CD4-positive, alpha-beta T cell (primary cell): ENCODE measurements at regions of chr17 and their contacts with region 1.

Region 1: GRCh38 chr17:63634163-63634562 is 11.9 kb downstream of the MAP3K3 start:
- DNase-seq: no peak
- ATAC-seq: no peak
- H3K4me3 ChIP-seq: no peak overlapping the region
- H3K4me3 Mint-ChIP-seq: no peak overlapping the region
- H3K27ac ChIP-seq: no peak overlapping the region
- H3K27ac Mint-ChIP-seq: no peak overlapping the region
- H3K4me1 ChIP-seq: peaks cover 10% of the 10 kb centered on the region
- H3K4me1 Mint-ChIP-seq: peaks cover 66% of the 10 kb centered on the region
- H3K27me3 ChIP-seq: no peaks in the 10 kb centered on the region
- H3K27me3 Mint-ChIP-seq: no peaks in the 10 kb centered on the region
- CTCF ChIP-seq: no peak

Region 2: DNA sequence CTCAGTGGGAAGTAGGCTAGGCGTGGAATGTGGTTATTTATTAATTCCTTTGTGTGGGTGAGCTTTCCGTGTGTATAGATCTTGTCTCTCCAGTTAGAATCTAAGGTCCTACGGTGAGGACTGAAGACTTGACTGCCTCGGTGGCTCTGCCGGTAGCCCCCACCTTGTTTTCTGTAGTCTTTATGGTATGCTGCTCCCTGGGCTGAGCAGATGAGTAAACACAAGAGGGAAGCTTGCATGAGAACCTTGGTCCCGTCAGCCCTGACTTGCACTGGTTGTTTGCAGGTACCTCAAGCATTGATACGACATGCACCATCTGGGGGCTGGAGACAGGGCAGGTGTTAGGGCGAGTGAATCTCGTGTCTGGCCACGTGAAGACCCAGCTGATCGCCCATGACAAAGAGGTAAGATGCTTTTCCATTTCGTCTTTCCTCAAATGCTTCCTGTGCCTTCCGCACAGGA is 54.6 kb before region 1 on chr17:
- CTCF ChIA-PET with region 1: no interaction called
- POLR2A ChIA-PET with region 1: no interaction called
- intact Hi-C with region 1: no loop called
- DNase-seq: no peak
- ATAC-seq: no peak
- H3K4me3 ChIP-seq: no peak overlapping the region
- H3K4me3 Mint-ChIP-seq: no peak overlapping the region
- H3K27ac ChIP-seq: no peak overlapping the region
- H3K27ac Mint-ChIP-seq: peak overlapping the region; percentile 39
- H3K4me1 ChIP-seq: peaks cover 7% of the 10 kb centered on the region
- H3K4me1 Mint-ChIP-seq: peaks cover 30% of the 10 kb centered on the region
- H3K27me3 ChIP-seq: no peaks in the 10 kb centered on the region
- H3K27me3 Mint-ChIP-seq: no peaks in the 10 kb centered on the region
- CTCF ChIP-seq: no peak

Region 3: GRCh38 chr17:63658366-63658765 is 24.2 kb after region 1 on chr17:
- CTCF ChIA-PET with region 1: no interaction called
- POLR2A ChIA-PET with region 1: no interaction called
- intact Hi-C with region 1: no loop called
- DNase-seq: no peak
- ATAC-seq: no peak
- H3K4me3 ChIP-seq: no peak overlapping the region
- H3K4me3 Mint-ChIP-seq: no peak overlapping the region
- H3K27ac ChIP-seq: no peak overlapping the region
- H3K27ac Mint-ChIP-seq: no peak overlapping the region
- H3K4me1 ChIP-seq: no peaks in the 10 kb centered on the region
- H3K4me1 Mint-ChIP-seq: no peaks in the 10 kb centered on the region
- H3K27me3 ChIP-seq: no peaks in the 10 kb centered on the region
- H3K27me3 Mint-ChIP-seq: no peaks in the 10 kb centered on the region
- CTCF ChIP-seq: no peak

Region 4: GRCh38 chr17:63685041-63685440 is 50.9 kb after region 1 on chr17:
- CTCF ChIA-PET with region 1: no interaction called
- POLR2A ChIA-PET with region 1: no interaction called
- intact Hi-C with region 1: loop called in 1 of 2 experiments (anchors 5 kb)
- DNase-seq: no peak
- ATAC-seq: no peak
- H3K4me3 ChIP-seq: no peak overlapping the region
- H3K4me3 Mint-ChIP-seq: no peak overlapping the region
- H3K27ac ChIP-seq: no peak overlapping the region
- H3K27ac Mint-ChIP-seq: no peak overlapping the region
- H3K4me1 ChIP-seq: no peaks in the 10 kb centered on the region
- H3K4me1 Mint-ChIP-seq: no peaks in the 10 kb centered on the region
- H3K27me3 ChIP-seq: no peaks in the 10 kb centered on the region
- H3K27me3 Mint-ChIP-seq: no peaks in the 10 kb centered on the region
- CTCF ChIP-seq: no peak